ENCODE measurements at regions of chr17 and their contacts with region 1.

Region 1: DNA sequence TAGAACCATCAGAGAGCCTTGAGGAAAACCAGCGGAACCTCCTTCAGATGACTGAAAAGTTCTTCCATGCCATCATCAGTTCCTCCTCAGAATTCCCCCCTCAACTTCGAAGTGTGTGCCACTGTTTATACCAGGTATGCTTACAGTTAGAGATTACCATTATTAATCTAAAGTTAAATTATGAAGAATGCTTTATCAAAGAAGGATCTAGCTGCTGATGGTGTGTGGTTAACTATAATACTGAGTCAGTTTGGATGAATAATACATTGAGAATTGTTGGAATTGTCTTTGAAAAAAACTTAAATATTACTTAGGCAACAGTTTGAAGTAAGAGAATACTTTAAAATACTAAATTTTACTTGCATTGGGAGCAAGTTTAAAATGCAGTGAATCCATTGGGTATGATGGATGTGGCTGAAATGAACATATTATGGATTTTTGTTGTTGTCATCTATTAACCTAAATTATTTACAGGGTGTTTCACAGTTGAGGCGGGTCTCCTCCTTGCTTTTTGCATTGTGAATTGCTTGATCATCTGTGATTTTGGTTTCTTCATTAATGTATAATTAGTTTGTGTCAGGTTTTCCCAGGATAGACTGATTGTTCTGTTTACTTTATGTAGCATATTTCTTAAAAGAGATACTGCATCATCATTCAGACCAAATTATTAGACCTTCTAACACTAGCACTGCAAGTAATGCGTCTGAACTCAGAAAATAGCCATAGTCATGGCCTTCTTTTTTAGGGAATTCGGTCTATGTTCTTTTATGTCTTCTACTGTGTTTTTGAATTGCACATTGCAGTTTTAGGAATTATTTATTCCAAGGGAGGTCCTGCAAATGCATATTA is 47.8 kb downstream of the OMG start:
- DNase-seq: no peak
- ATAC-seq: no peak
- H3K4me3 ChIP-seq: no peak overlapping the region
- H3K27ac ChIP-seq: no peak overlapping the region
- H3K4me1 ChIP-seq: peaks cover 0 to 25% (median 21%) of the 10 kb centered on the region in 9 donors
- H3K27me3 ChIP-seq: no peaks in the 10 kb centered on the region
- CTCF ChIP-seq: no peak

Region 2: GRCh38 chr17:31321481-31321880 is 72.3 kb after region 1 on chr17 and contains the start of gene EVI2A:
- intact Hi-C with region 1: loop called in 1 of 10 experiments (anchors 10 kb)
- DNase-seq: peak in 1 of 2 donors; percentile 16
- ATAC-seq: peak in 6 of 8 donors; percentile 17 to 52 (median 45)
- H3K4me3 ChIP-seq: peak within 1 kb of the TSS in 7 of 10 donors; percentile 4 to 57 (median 26)
- H3K27ac ChIP-seq: peak within 1 kb of the TSS in 6 of 10 donors; percentile 0 to 89 (median 20)
- H3K4me1 ChIP-seq: peaks cover 0 to 30% (median 7%) of the 10 kb centered on the region in 9 donors
- H3K27me3 ChIP-seq: no peaks in the 10 kb centered on the region
- CTCF ChIP-seq: no peak
- total RNA-seq, gene EVI2A: 0.50 to 9.0 (median 1.3) TPM

Measured in heart right ventricle (tissue), 16 donors.